ENCODE measurements at regions of chr1 and their contacts with region 1.

Region 1: DNA sequence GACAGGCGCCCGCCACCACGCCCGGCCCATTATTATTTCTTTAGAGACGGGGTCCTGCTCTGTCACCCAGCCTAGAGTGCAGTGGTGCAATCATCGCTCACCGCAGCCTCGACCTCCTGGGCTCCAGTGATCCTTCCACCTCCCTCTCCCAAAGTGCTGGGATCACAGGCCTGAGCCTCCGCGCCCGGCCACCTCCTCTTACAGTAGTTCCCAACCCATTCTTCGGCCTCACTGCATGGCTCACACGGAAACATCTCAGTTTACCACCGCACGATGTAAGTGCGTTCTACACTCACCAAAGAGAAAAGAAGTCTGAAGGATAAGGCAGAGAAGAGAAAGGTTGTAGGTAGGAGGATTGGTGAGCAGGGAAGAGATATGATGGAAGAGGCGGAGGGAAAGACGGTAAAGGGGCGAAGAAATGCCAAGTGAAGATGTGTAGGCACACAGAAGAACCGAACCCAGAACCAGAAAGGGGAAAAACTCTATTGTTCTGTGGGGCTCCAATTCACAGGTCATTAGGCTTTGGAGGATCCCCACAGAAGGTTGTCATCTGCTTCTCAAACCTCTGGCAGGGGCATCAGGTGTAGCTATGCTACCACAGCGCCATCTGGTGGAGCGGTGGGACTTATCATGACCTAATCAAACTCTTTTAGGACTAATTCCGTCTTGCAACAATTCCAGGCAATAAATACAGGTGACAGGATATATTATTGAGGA is 504.2 kb downstream of the SMYD3 start:
- DNase-seq: peak; percentile 78
- CTCF ChIP-seq: peak; percentile 82

Region 2: DNA sequence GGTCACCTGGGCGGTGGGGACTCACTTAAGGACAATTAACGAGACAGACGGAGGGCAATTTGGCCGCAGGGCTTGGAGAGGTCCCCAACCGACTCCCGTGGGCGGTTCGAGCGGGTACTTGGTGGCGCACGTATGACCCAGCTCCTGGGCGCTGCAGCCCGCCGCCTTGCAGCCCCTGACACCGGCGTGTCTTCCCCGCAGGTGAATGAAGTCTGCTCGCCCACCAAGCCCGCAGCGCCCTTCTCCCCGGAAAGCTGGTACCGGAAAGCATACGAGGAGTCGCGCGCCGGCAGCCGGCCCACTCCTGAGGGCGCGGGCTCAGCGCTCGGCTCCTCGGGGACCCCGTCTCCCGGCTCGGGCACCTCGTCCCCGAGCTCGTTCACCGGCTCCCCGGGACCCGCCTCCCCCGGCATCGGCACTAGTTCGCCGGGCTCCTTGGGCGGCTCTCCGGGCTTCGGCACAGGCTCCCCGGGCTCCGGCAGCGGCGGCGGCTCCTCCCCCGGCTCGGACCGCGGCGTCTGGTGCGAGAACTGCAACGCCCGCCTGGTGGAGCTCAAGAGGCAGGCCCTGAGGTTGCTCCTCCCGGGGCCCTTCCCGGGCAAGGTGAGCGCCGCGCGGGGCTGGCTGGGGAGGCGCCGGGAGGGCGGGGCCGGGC is 846.7 kb before region 1 on chr1:
- in situ Hi-C with region 1: loop called (anchors 5 kb)
- DNase-seq: peak; percentile 96
- CTCF ChIP-seq: peak; percentile 89

Region 3: GRCh38 chr1:246043367-246043955 is 40.6 kb after region 1 on chr1:
- in situ Hi-C with region 1: no loop called
- DNase-seq: no peak
- CTCF ChIP-seq: no peak

Region 4: DNA sequence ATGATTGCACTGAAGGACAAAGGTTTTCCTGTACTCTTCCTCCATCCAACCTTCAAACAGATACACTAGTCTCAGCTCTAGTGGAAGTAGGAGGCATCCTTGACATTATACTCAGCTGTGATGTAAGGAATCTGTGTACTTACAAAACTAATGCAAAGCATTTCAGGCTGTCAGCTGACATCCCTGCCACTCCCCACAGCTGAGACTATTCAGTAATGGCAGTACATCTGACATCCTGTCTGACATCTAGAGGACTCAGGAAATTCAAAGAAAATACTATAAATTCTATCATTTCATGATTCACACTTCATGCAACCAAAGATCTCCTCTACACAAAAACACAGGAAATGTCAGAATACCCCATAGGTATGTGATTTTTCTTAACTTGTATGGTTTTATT is 178.4 kb after region 1 on chr1:
- in situ Hi-C with region 1: no loop called
- DNase-seq: no peak
- CTCF ChIP-seq: no peak

Region 5: DNA sequence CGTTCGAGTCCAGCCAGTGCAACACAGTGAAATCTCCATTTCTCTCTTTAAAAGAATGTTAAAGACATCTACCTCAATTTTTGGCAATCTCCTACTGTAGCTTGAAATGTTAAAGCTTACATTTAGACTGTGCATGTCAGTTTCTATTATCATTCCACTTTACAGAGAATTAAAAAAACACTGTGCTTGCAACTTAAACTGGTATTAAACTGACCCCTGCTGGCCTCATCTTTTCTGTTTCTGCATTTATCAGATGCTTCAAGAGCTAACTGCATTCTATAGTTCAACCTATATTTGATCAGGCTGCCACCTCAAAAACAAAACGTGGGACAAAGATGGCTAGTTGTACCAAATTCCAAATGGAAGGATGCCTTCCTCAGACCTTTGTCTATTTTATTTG is 277.7 kb after region 1 on chr1:
- in situ Hi-C with region 1: loop called (anchors 25 kb)
- DNase-seq: no peak
- CTCF ChIP-seq: peak; percentile 33

Region 6: DNA sequence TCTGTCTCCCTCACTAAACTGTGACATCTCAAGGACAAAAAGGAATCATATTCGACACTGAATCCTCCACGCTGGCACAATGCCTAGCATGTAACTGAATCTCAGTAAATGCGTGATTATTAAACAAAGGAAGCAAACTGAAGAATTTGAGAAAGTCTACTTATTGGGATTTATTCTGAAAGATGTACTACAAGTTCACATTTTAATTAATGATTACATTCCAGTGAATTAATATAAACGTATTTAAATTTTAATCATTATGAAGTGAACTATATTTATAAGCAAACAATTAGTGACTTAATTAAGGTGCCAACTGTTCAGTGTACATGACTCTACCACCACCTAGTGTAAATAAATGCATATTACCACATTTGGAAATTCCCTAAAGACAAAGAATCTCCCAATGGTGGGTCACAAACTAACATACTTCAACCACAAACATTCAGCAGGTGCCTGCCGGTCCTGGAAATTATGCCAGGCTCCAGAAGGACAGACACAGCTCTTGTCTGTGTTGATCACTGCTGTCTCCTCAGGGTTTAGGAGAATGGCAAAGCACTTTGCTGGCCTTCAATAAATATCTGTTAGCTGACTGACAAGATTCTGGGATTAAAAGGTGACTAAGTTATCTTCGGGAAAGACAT is 447.8 kb after region 1 on chr1:
- in situ Hi-C with region 1: loop called (anchors 10 kb)
- DNase-seq: peak; percentile 51
- CTCF ChIP-seq: peak; percentile 63

Measured in GM13977 (cell line).